Naive thymus-derived CD4-positive, alpha-beta T cell (primary cell): ENCODE measurements at regions of chrX and their contacts with region 1.

Region 1: GRCh38 chrX:37745354-37745753 is 34.5 kb upstream of the CYBB start:
- DNase-seq: peak; percentile 48 to 76 (median 64)
- ATAC-seq: peak; percentile 89
- H3K4me3 ChIP-seq: no peak overlapping the region
- H3K4me3 Mint-ChIP-seq: peak overlapping the region in 1 of 10 donors; percentile 9
- H3K27ac ChIP-seq: no peak overlapping the region
- H3K27ac Mint-ChIP-seq: peak overlapping the region in 2 of 9 donors; percentile 49 to 63
- H3K4me1 ChIP-seq: peaks cover 6 to 7% of the 10 kb centered on the region in 2 donors
- H3K4me1 Mint-ChIP-seq: peaks cover 8 to 21% (median 11%) of the 10 kb centered on the region in 7 donors
- H3K27me3 ChIP-seq: no peaks in the 10 kb centered on the region
- H3K27me3 Mint-ChIP-seq: peaks cover 0 to 18% (median 0%) of the 10 kb centered on the region in 5 donors

Region 2: GRCh38 chrX:37846934-37847732 is 101.8 kb after region 1 on chrX and contains the start of gene DYNLT3:
- CTCF ChIA-PET with region 1: interaction called, 3 read pairs
- POLR2A ChIA-PET with region 1: interaction called, 3 read pairs
- intact Hi-C with region 1: loop called in 1 of 2 experiments (anchors 1 kb)
- DNase-seq: peak; percentile 51 to 80 (median 71)
- ATAC-seq: peak; percentile 99
- H3K4me3 ChIP-seq: peak within 1 kb of the TSS; percentile 84
- H3K4me3 Mint-ChIP-seq: peak within 1 kb of the TSS; percentile 68 to 93 (median 88)
- H3K27ac ChIP-seq: peak within 1 kb of the TSS; percentile 96
- H3K27ac Mint-ChIP-seq: peak within 1 kb of the TSS; percentile 89 to 98 (median 94)
- H3K4me1 ChIP-seq: peaks cover 4 to 8% of the 10 kb centered on the region in 2 donors
- H3K4me1 Mint-ChIP-seq: peaks cover 5 to 44% (median 31%) of the 10 kb centered on the region in 7 donors
- H3K27me3 ChIP-seq: no peaks in the 10 kb centered on the region
- H3K27me3 Mint-ChIP-seq: no peaks in the 10 kb centered on the region
- total RNA-seq, gene DYNLT3: 13.8 to 39.3 (median 25.8) TPM

Region 3: GRCh38 chrX:38166478-38167083 is 421.2 kb after region 1 on chrX:
- CTCF ChIA-PET with region 1: no interaction called
- POLR2A ChIA-PET with region 1: no interaction called
- intact Hi-C with region 1: loop called in 1 of 2 experiments (anchors 5 kb)
- DNase-seq: peak in 4 of 9 donors; percentile 7 to 17 (median 12)
- ATAC-seq: no peak
- H3K4me3 ChIP-seq: no peak overlapping the region
- H3K4me3 Mint-ChIP-seq: no peak overlapping the region
- H3K27ac ChIP-seq: no peak overlapping the region
- H3K27ac Mint-ChIP-seq: no peak overlapping the region
- H3K4me1 ChIP-seq: no peaks in the 10 kb centered on the region
- H3K4me1 Mint-ChIP-seq: no peaks in the 10 kb centered on the region
- H3K27me3 ChIP-seq: no peaks in the 10 kb centered on the region
- H3K27me3 Mint-ChIP-seq: peaks cover 0 to 4% (median 0%) of the 10 kb centered on the region in 5 donors